ENCODE measurements at regions of chr11 and their contacts with region 1.

Region 1: GRCh38 chr11:71251761-71252443 is 475 bp downstream of the SHANK2 start:
- DNase-seq: peak in 1 of 2 experiments; percentile 62
- H3K4me3 ChIP-seq: peak overlapping the region; percentile 97
- H3K27ac ChIP-seq: peak overlapping the region; percentile 87
- H3K4me1 ChIP-seq: peaks cover 41% of the 10 kb centered on the region
- H3K27me3 ChIP-seq: no peaks in the 10 kb centered on the region
- CTCF ChIP-seq: peak; percentile 70; the same call in 1 of the 2 replicates

Region 2: GRCh38 chr11:71206186-71206585 is 45.7 kb before region 1 on chr11:
- CTCF ChIA-PET with region 1: no interaction called
- POLR2A ChIA-PET with region 1: no interaction called
- intact Hi-C with region 1: no loop called
- DNase-seq: no peak
- H3K4me3 ChIP-seq: no peak overlapping the region
- H3K27ac ChIP-seq: no peak overlapping the region
- H3K4me1 ChIP-seq: no peaks in the 10 kb centered on the region
- H3K27me3 ChIP-seq: no peaks in the 10 kb centered on the region
- CTCF ChIP-seq: no peak

Region 3: DNA sequence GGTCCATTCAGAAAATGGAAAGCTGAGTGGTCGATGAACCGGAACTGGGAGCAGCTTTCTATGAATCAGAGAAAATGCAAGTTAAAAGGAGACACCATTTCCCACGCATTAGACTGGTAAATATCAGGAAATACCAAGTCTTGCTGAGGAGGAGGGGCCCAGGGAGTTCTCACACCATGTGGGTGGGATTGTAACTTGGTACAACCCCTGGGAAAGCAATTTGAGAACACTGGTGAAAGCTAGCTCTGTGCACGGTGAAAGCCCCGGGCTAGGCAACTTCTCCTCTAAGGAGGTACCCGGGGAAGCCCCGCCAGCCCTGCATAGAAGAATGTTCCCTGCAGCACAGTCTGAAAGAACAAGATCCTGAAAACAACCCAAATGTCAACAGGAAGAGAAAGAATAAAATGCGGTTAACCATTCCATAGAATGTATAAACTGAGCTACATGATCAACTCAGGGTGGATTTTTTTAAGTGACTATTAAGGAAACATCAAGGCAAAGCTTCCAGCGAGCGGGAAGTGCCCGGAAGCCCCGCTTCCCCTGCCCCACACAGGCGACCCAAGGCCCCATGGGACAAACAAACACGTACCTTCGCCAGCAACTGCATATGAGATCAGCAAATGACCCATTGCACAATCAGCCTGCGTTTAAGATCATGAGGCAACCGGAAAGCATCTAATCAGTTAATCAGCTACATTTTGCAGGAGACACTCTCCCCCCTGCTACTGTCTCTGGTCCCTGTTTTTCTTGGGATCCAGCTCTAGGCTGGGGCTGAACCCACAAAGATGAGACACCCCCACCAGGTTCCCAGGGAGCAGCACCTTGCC is 10.8 kb before region 1 on chr11:
- CTCF ChIA-PET with region 1: interaction called, 12 read pairs
- POLR2A ChIA-PET with region 1: interaction called, 3 read pairs
- intact Hi-C with region 1: loop called (anchors 1 kb)
- DNase-seq: peak; percentile 89 to 97
- H3K4me3 ChIP-seq: peak overlapping the region; percentile 43
- H3K27ac ChIP-seq: peak overlapping the region; percentile 88
- H3K4me1 ChIP-seq: peaks cover 25% of the 10 kb centered on the region
- H3K27me3 ChIP-seq: no peaks in the 10 kb centered on the region
- CTCF ChIP-seq: no peak

Region 4: GRCh38 chr11:71283881-71284441 is 32.1 kb after region 1 on chr11:
- CTCF ChIA-PET with region 1: interaction called, 5 read pairs
- POLR2A ChIA-PET with region 1: interaction called, 6 read pairs
- intact Hi-C with region 1: loop called (anchors 2 kb)
- DNase-seq: peak; percentile 92 to 97
- H3K4me3 ChIP-seq: peak overlapping the region; percentile 55
- H3K27ac ChIP-seq: peak overlapping the region; percentile 90
- H3K4me1 ChIP-seq: peaks cover 32% of the 10 kb centered on the region
- H3K27me3 ChIP-seq: no peaks in the 10 kb centered on the region
- CTCF ChIP-seq: no peak

Region 5: DNA sequence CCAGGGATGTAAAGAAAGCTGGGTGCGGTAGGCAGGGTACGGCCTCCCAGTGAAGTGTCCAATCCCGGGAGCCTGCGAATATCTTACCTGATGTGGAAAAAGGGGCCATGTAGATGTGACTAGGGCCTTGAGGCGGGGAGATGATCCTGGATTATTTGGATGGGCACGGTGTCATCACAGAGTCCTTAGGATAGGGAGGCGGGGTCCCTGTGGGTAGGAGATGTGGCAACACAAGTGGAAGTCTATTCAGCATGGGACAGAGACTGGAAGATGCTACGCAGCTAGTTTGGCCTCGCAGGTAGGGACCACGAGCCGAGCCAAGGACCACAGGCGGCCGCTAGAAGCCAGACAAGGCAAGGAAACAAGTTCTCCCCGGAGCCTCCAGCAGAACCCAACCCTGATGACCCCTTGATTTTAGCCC is 46.9 kb after region 1 on chr11:
- CTCF ChIA-PET with region 1: interaction called, 4 read pairs
- POLR2A ChIA-PET with region 1: interaction called, 6 read pairs
- intact Hi-C with region 1: loop called (anchors 1 kb)
- DNase-seq: no peak
- H3K4me3 ChIP-seq: no peak overlapping the region
- H3K27ac ChIP-seq: peak overlapping the region; percentile 66
- H3K4me1 ChIP-seq: peaks cover 49% of the 10 kb centered on the region
- H3K27me3 ChIP-seq: no peaks in the 10 kb centered on the region
- CTCF ChIP-seq: no peak

Region 6: DNA sequence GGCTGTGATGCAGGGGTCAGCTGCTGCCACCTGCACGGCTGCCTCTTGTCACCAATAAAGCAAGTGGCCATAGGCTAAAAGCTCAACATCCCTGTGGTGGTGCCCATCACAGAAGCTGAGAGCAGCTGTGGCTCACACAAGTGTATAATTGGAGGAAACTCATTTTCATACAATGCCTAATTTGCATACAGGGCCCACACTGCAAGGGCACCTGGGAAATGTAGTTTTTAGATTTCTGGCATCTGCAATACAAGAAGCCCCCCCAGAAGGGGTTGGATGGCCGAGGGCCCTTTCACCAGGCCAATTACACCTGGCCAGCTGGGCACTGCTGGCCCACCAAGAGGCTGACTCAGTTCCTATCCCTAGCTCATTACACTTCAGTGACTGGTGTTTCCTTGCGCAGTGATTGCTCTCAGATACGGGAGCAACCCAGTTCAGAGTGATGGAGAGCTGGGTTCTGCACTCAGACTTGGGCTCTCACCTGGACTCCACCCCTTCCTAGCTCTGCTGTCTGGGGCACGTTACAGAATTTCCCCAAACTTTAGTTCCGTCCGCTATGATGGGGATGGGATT is 81.5 kb after region 1 on chr11:
- CTCF ChIA-PET with region 1: interaction called, 8 read pairs
- POLR2A ChIA-PET with region 1: interaction called, 30 read pairs
- intact Hi-C with region 1: no loop called
- DNase-seq: no peak
- H3K4me3 ChIP-seq: no peak overlapping the region
- H3K27ac ChIP-seq: no peak overlapping the region
- H3K4me1 ChIP-seq: no peaks in the 10 kb centered on the region
- H3K27me3 ChIP-seq: no peaks in the 10 kb centered on the region; the same call in none of the 2 replicates
- CTCF ChIP-seq: no peak

Region 7: DNA sequence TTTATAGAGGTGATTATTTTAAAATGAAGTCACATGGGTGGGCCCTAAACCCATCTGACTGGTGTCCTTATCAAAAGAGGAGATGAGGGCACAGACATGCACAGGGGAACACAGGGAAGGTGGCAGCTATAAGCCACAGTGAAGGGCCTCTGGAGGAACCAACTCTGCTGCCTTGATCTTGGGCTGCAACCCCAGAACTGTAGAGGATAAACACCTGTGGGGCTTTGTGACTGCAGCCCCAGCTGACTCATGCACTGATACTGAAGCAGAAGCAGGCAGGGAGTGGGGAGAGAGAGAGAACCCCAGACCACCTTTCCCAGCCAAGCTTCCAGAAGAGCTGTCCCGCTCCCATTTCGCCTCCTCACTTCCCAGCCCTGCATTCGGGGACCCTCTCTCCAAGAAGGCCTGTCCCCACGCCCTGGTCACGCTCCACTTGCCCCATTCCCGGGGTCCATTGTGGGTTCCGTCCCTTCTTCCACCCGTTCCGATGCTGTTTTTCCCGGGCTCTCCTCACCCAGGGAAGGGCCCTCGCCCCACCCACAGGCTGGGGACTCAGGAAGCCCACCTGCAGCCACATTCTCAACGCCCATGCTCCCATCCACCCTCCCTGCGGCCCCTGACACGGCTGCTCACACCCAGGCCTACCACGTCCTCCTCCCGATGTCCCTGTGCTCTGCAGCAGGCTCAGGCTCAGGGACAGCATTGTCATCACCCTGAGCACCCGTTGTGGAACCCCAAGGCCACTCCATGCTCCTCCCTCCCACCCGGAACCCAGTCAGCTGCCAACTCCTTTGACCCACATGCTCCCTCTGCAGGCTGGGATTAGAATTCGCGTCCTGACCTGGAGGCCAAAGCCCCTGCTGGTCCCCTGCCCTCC is 91.3 kb after region 1 on chr11:
- CTCF ChIA-PET with region 1: interaction called, 3 read pairs
- POLR2A ChIA-PET with region 1: no interaction called
- intact Hi-C with region 1: loop called (anchors 1 kb)
- DNase-seq: peak; percentile 43 to 53
- H3K4me3 ChIP-seq: no peak overlapping the region
- H3K27ac ChIP-seq: no peak overlapping the region
- H3K4me1 ChIP-seq: no peaks in the 10 kb centered on the region
- H3K27me3 ChIP-seq: peaks cover 47% of the 10 kb centered on the region
- CTCF ChIP-seq: peak; percentile 82

Region 8: DNA sequence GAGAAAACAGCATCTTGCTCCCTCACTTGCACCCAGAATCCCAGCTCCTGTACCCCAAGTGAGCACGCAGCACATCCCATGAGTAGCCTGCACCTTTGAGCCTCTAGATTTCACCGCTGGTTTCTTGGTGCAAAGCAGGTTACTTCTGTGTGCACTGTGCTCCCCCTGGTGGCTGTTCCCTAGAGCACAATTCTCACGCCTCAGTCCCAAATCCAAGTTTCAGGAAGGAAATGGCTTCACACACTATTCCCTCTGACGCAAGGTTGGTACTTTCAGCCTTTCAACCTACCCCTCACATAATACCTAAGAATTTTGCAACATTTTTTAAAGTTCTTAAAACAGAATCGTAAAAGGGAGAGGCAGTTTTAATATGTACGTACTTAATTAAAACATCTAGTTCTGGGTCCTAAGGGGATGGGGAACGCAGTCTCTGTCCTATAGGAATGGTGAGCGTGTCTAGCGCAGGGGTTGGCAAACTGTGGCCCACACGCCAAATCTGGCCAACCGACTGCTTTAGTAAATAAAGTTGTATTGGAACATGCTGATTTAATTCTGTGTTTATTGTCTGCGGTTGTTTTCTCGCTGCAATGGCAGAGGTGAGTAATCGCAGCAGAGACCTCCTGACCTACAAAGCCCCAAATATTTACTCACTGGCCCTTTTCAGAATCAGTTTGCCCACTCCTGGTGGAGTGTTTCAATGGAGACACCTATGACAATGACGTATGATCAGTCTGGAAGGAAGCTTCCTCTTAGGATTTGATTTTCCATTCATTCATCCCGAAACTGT is 168.7 kb after region 1 on chr11:
- CTCF ChIA-PET with region 1: no interaction called
- POLR2A ChIA-PET with region 1: no interaction called
- intact Hi-C with region 1: loop called (anchors 10 kb)
- DNase-seq: peak; percentile 48 to 58
- H3K4me3 ChIP-seq: no peak overlapping the region
- H3K27ac ChIP-seq: no peak overlapping the region
- H3K4me1 ChIP-seq: peaks cover 10% of the 10 kb centered on the region
- H3K27me3 ChIP-seq: peaks cover 11% of the 10 kb centered on the region; the same call in 1 of the 2 replicates
- CTCF ChIP-seq: peak; percentile 87

Region 9: GRCh38 chr11:71530602-71531001 is 278.7 kb after region 1 on chr11:
- CTCF ChIA-PET with region 1: no interaction called
- POLR2A ChIA-PET with region 1: no interaction called
- intact Hi-C with region 1: no loop called
- DNase-seq: no peak
- H3K4me3 ChIP-seq: no peak overlapping the region
- H3K27ac ChIP-seq: no peak overlapping the region
- H3K4me1 ChIP-seq: 0 out of 2 replicates have a peak, but pooled peaks cover under 1% of the 10 kb centered on the region
- H3K27me3 ChIP-seq: no peaks in the 10 kb centered on the region
- CTCF ChIP-seq: no peak

Measured in PC-9 (cell line).